ENCODE measurements at regions of chr12 and their contacts with region 1.

Region 1: GRCh38 chr12:12975322-12976077 is 23.5 kb upstream of the GPRC5D start:
- DNase-seq: no peak
- H3K4me3 ChIP-seq: no peak overlapping the region
- H3K27ac ChIP-seq: no peak overlapping the region
- H3K4me1 ChIP-seq: peaks cover 0 to 3% (median 0%) of the 10 kb centered on the region in 4 experiments; a peak in 1 of 7 replicates
- H3K27me3 ChIP-seq: no peaks in the 10 kb centered on the region
- CTCF ChIP-seq: peak; percentile 60 to 80 (median 73)
- EP300 ChIP-seq: no peak
- POLR2A ChIP-seq: no peak
- RAD21 ChIP-seq: peak; percentile 75 to 84

Region 2: DNA sequence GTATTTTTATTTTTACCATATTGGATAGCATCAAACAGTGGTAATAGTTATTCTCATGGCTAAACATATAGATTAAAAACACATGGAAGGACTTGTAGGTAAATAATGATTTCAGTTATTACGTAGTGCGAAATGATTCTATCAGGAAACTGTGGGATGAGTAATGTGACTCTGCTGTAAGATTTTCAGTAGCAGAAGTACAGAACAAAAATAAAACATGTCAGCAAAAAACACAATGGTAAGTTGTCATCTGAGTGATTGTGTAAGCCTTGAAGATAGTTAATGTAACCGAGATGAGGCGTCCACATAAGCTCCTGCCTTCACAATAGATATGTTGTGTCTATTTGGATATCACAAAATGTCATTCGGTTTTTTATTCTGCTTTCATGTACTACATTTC is 518.9 kb before region 1 on chr12:
- CTCF ChIA-PET with region 1: no interaction called
- POLR2A ChIA-PET with region 1: no interaction called
- DNase-seq: no peak
- H3K4me3 ChIP-seq: no peak overlapping the region
- H3K27ac ChIP-seq: no peak overlapping the region
- H3K4me1 ChIP-seq: peaks cover 0 to 2% (median 0%) of the 10 kb centered on the region in 4 experiments; a peak in 2 of 7 replicates
- H3K27me3 ChIP-seq: no peaks in the 10 kb centered on the region
- CTCF ChIP-seq: no peak
- EP300 ChIP-seq: no peak
- POLR2A ChIP-seq: no peak
- RAD21 ChIP-seq: no peak

Region 3: GRCh38 chr12:12774791-12775190 is 200.7 kb before region 1 on chr12:
- CTCF ChIA-PET with region 1: no interaction called
- POLR2A ChIA-PET with region 1: no interaction called
- DNase-seq: no peak
- H3K4me3 ChIP-seq: no peak overlapping the region
- H3K27ac ChIP-seq: no peak overlapping the region
- H3K4me1 ChIP-seq: no peaks in the 10 kb centered on the region; a peak in 1 of 7 replicates
- H3K27me3 ChIP-seq: no peaks in the 10 kb centered on the region
- CTCF ChIP-seq: no peak
- EP300 ChIP-seq: no peak
- POLR2A ChIP-seq: no peak
- RAD21 ChIP-seq: no peak

Region 4: GRCh38 chr12:12872139-12872881 is 103.2 kb before region 1 on chr12:
- CTCF ChIA-PET with region 1: no interaction called
- POLR2A ChIA-PET with region 1: no interaction called
- DNase-seq: no peak
- H3K4me3 ChIP-seq: no peak overlapping the region
- H3K27ac ChIP-seq: no peak overlapping the region
- H3K4me1 ChIP-seq: peaks cover 5 to 10% (median 10%) of the 10 kb centered on the region in 4 experiments; a peak in 6 of 7 replicates
- H3K27me3 ChIP-seq: no peaks in the 10 kb centered on the region
- CTCF ChIP-seq: no peak
- EP300 ChIP-seq: no peak
- POLR2A ChIP-seq: no peak
- RAD21 ChIP-seq: no peak

Region 5: GRCh38 chr12:12890815-12891645 is 84.5 kb before region 1 on chr12 and contains the start of gene GPRC5A:
- CTCF ChIA-PET with region 1: interaction called, 12 read pairs
- POLR2A ChIA-PET with region 1: no interaction called
- DNase-seq: peak in 1 of 2 experiments; percentile 75
- H3K4me3 ChIP-seq: peak within 1 kb of the TSS; percentile 59 to 72 (median 66)
- H3K27ac ChIP-seq: no peak within 1 kb of the TSS
- H3K4me1 ChIP-seq: peaks cover 6 to 13% (median 9%) of the 10 kb centered on the region in 4 experiments; a peak in 5 of 7 replicates
- H3K27me3 ChIP-seq: peaks cover 0 to 36% (median 23%) of the 10 kb centered on the region in 4 experiments; a peak in 6 of 7 replicates
- CTCF ChIP-seq: peak; percentile 1 to 15 (median 11); a peak in 2 of 4 replicates
- EP300 ChIP-seq: no peak
- POLR2A ChIP-seq: no peak
- RAD21 ChIP-seq: peak; percentile 6 to 38; a peak in 3 of 4 replicates
- total RNA-seq, gene GPRC5A: 1.0 and 1.5 TPM in 2 replicates

Region 6: GRCh38 chr12:12922191-12922616 is 53.3 kb before region 1 on chr12:
- CTCF ChIA-PET with region 1: interaction called, 118 read pairs
- POLR2A ChIA-PET with region 1: interaction called, 3 read pairs
- DNase-seq: no peak
- H3K4me3 ChIP-seq: no peak overlapping the region
- H3K27ac ChIP-seq: no peak overlapping the region
- H3K4me1 ChIP-seq: peaks cover 0 to 4% (median 1%) of the 10 kb centered on the region in 4 experiments; a peak in 3 of 7 replicates
- H3K27me3 ChIP-seq: no peaks in the 10 kb centered on the region
- CTCF ChIP-seq: no peak
- EP300 ChIP-seq: no peak
- POLR2A ChIP-seq: no peak
- RAD21 ChIP-seq: no peak